Transverse colon (tissue), 4 donors: ENCODE measurements at regions of chr1 and their contacts with region 1.

Region 1: GRCh38 chr1:95233737-95234500 is at the start of gene RWDD3:
- DNase-seq: peak; percentile 96
- H3K4me3 ChIP-seq: peak within 1 kb of the TSS; percentile 77 to 89 (median 85)
- H3K27ac ChIP-seq: peak within 1 kb of the TSS; percentile 88 to 91 (median 90)
- H3K4me1 ChIP-seq: peaks cover 6 to 31% (median 12%) of the 10 kb centered on the region in 4 donors
- H3K27me3 ChIP-seq: no peaks in the 10 kb centered on the region
- CTCF ChIP-seq: peak; percentile 47 to 93 (median 80)
- EP300 ChIP-seq: no peak
- POLR2A ChIP-seq: peak; percentile 73
- total RNA-seq, gene RWDD3: 2.4 to 22.8 (median 15.1) TPM

Region 2: GRCh38 chr1:94854458-94855306 is 379.2 kb before region 1 on chr1:
- in situ Hi-C with region 1: loop called in 3 of 4 experiments (anchors 25 kb)
- intact Hi-C with region 1: no loop called
- DNase-seq: peak; percentile 88
- H3K4me3 ChIP-seq: peak overlapping the region in 3 of 4 donors; percentile 23 to 48 (median 26)
- H3K27ac ChIP-seq: peak overlapping the region; percentile 73 to 87 (median 82)
- H3K4me1 ChIP-seq: peaks cover 4 to 24% (median 14%) of the 10 kb centered on the region in 4 donors
- H3K27me3 ChIP-seq: no peaks in the 10 kb centered on the region
- CTCF ChIP-seq: peak; percentile 82 to 97 (median 87)
- EP300 ChIP-seq: no peak
- POLR2A ChIP-seq: no peak

Region 3: GRCh38 chr1:95084317-95085176 is 149.4 kb before region 1 on chr1:
- in situ Hi-C with region 1: loop called in 3 of 4 experiments (anchors 25 kb)
- intact Hi-C with region 1: loop called (anchors 5 kb)
- DNase-seq: no peak
- H3K4me3 ChIP-seq: no peak overlapping the region
- H3K27ac ChIP-seq: peak overlapping the region; percentile 33 to 66 (median 56)
- H3K4me1 ChIP-seq: peaks cover 0 to 13% (median 4%) of the 10 kb centered on the region in 4 donors
- H3K27me3 ChIP-seq: no peaks in the 10 kb centered on the region
- CTCF ChIP-seq: peak; percentile 56 to 77 (median 64)
- EP300 ChIP-seq: no peak
- POLR2A ChIP-seq: peak; percentile 32

Region 4: GRCh38 chr1:95116580-95117206 is 117.2 kb before region 1 on chr1:
- in situ Hi-C with region 1: no loop called
- intact Hi-C with region 1: loop called (anchors 10 kb)
- DNase-seq: peak; percentile 79
- H3K4me3 ChIP-seq: peak overlapping the region; percentile 71 to 95 (median 81)
- H3K27ac ChIP-seq: peak overlapping the region; percentile 87 to 90 (median 88)
- H3K4me1 ChIP-seq: peaks cover 0 to 18% (median 9%) of the 10 kb centered on the region in 4 donors
- H3K27me3 ChIP-seq: no peaks in the 10 kb centered on the region
- CTCF ChIP-seq: peak; percentile 69 to 89 (median 78)
- EP300 ChIP-seq: no peak
- POLR2A ChIP-seq: no peak